Activated CD4-positive, alpha-beta T cell treated with anti-CD3 and anti-CD28 coated beads for 36 hours (primary cell): ENCODE measurements at regions of chr12 and their contacts with region 1.

Region 1: DNA sequence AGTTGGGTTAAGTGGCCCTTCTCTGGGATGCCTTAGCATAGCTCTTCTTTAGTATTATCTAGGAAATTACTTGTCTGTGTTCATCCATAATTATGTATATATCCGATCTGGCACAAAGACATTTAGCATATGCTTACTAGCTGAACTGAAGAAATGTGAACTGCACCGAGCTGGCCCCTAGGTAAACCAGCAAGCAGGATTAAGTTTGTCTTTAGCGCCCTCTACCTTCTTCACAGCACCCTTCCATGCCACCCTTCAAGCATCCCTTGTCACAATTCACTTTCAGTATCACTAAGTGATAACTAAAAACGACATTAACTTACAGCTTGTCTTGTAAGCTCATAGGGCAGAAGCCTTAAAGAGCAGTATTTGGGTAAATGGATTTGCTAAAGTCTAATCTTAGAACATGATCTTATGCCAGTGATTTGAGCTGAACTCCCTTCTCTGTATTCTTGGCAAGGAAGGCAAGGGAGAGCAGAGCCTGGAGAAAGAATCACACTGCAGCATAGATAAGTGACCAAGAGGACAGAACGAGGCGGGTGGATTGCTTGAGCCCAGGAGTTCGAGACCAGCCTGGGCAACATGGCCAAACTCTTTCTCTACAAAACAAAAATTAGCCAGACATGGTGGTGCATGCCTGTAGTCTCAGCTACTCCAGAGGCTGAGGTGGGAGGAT is 2.6 kb upstream of the HAL start:
- DNase-seq: peak; percentile 70
- ATAC-seq: peak; percentile 98
- H3K4me3 Mint-ChIP-seq: no peak overlapping the region
- H3K27ac Mint-ChIP-seq: peak overlapping the region; percentile 10
- H3K4me1 Mint-ChIP-seq: peaks cover 11% of the 10 kb centered on the region
- H3K27me3 Mint-ChIP-seq: no peaks in the 10 kb centered on the region

Region 2: GRCh38 chr12:95829395-95829794 is 169.4 kb before region 1 on chr12:
- CTCF ChIA-PET with region 1: no interaction called
- POLR2A ChIA-PET with region 1: no interaction called
- intact Hi-C with region 1: loop called in 1 of 2 experiments (anchors 5 kb)
- DNase-seq: no peak
- ATAC-seq: no peak
- H3K4me3 Mint-ChIP-seq: no peak overlapping the region
- H3K27ac Mint-ChIP-seq: no peak overlapping the region
- H3K4me1 Mint-ChIP-seq: peaks cover 10% of the 10 kb centered on the region
- H3K27me3 Mint-ChIP-seq: peaks cover 14% of the 10 kb centered on the region

Region 3: GRCh38 chr12:95942524-95943329 is 56.0 kb before region 1 on chr12 and contains the start of gene CCDC38:
- CTCF ChIA-PET with region 1: interaction called, 20 read pairs
- POLR2A ChIA-PET with region 1: interaction called, 4 read pairs
- intact Hi-C with region 1: loop called in 1 of 2 experiments (anchors 2 kb)
- DNase-seq: peak; percentile 91
- ATAC-seq: peak; percentile 98
- H3K4me3 Mint-ChIP-seq: peak within 1 kb of the TSS; percentile 84
- H3K27ac Mint-ChIP-seq: peak within 1 kb of the TSS; percentile 91
- H3K4me1 Mint-ChIP-seq: peaks cover 4% of the 10 kb centered on the region
- H3K27me3 Mint-ChIP-seq: no peaks in the 10 kb centered on the region
- total RNA-seq, gene CCDC38: 0.21 TPM in 1 of 2 experiments, not detected in the other

Region 4: DNA sequence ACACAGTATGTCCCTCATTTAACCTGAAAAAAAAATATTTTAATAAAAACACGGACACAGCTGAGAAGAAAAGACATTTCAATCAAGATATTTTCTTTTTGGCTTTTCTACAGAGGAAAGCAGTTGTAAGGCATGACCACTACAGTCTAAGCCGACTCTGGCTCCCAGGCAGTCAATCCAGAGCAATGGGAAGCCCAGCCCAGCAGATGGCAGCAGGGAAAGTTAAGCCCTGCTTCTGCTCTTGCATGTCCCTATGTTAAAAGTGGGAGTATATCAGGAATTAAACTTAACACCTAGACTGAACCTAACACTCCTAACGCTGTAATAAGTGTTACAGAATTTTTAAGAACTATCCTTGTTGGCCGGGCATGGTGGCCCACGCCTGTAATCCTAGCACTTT is 16.9 kb after region 1 on chr12:
- CTCF ChIA-PET with region 1: interaction called, 13 read pairs
- POLR2A ChIA-PET with region 1: no interaction called
- intact Hi-C with region 1: no loop called
- DNase-seq: peak; percentile 31
- ATAC-seq: no peak
- H3K4me3 Mint-ChIP-seq: no peak overlapping the region
- H3K27ac Mint-ChIP-seq: no peak overlapping the region
- H3K4me1 Mint-ChIP-seq: no peaks in the 10 kb centered on the region
- H3K27me3 Mint-ChIP-seq: no peaks in the 10 kb centered on the region